Dorsolateral prefrontal cortex (tissue), 120 donors: ENCODE measurements at regions of chr13 and their contacts with region 1.

Region 1: GRCh38 chr13:98653463-98653985 is 76.6 kb upstream of the STK24 start:
- DNase-seq: peak; percentile 51 to 83 (median 76)
- H3K4me3 ChIP-seq: peak overlapping the region in 3 of 59 donors; percentile 3 to 24 (median 5)
- H3K27ac ChIP-seq: no peak overlapping the region
- H3K27me3 ChIP-seq: no peaks in the 10 kb centered on the region
- CTCF ChIP-seq: peak; percentile 65 to 94 (median 88)

Region 2: GRCh38 chr13:97855570-97856303 is 797.8 kb before region 1 on chr13:
- intact Hi-C with region 1: loop called (anchors 5 to 10 kb)
- DNase-seq: peak in 5 of 10 donors; percentile 20 to 51 (median 41)
- H3K4me3 ChIP-seq: peak overlapping the region in 9 of 59 donors; percentile 3 to 33 (median 21)
- H3K27ac ChIP-seq: peak overlapping the region in 3 of 59 donors; percentile 24 to 38 (median 29)
- H3K27me3 ChIP-seq: peaks cover 0 to 6% (median 0%) of the 10 kb centered on the region in 45 donors
- CTCF ChIP-seq: peak; percentile 80 to 95 (median 88)

Region 3: GRCh38 chr13:98144801-98145350 is 508.6 kb before region 1 on chr13:
- intact Hi-C with region 1: no loop called
- DNase-seq: peak in 3 of 10 donors; percentile 15 to 42 (median 23)
- H3K4me3 ChIP-seq: peak overlapping the region in 58 of 59 donors; percentile 30 to 81 (median 64)
- H3K27ac ChIP-seq: peak overlapping the region in 30 of 59 donors; percentile 6 to 84 (median 54)
- H3K27me3 ChIP-seq: peaks cover 0 to 49% (median 0%) of the 10 kb centered on the region in 45 donors
- CTCF ChIP-seq: peak in 5 of 56 donors; percentile 10 to 36 (median 17)